Heart right ventricle (tissue), 16 donors: ENCODE measurements at regions of chr1 and their contacts with region 1.

Region 1: GRCh38 chr1:173824331-173825081 is at the starts of genes CENPL and DARS2:
- DNase-seq: peak; percentile 96 to 98
- ATAC-seq: peak; percentile 96 to 100 (median 99)
- H3K4me3 ChIP-seq: peak within 1 kb of the TSS; percentile 56 to 93 (median 71)
- H3K27ac ChIP-seq: peak within 1 kb of the TSS; percentile 77 to 95 (median 92)
- H3K4me1 ChIP-seq: peaks cover 0 to 36% (median 7%) of the 10 kb centered on the region in 9 donors
- H3K27me3 ChIP-seq: no peaks in the 10 kb centered on the region
- CTCF ChIP-seq: no peak
- total RNA-seq, gene CENPL: 2.4 to 7.0 (median 3.5) TPM
- total RNA-seq, gene DARS2: 11.3 to 22.8 (median 16.0) TPM

Region 2: GRCh38 chr1:172745014-172745413 is 1079.5 kb before region 1 on chr1:
- intact Hi-C with region 1: loop called in 4 of 10 experiments (anchors 10 kb)
- DNase-seq: peak in 1 of 2 donors; percentile 33
- ATAC-seq: peak in 7 of 8 donors; percentile 56 to 81 (median 77)
- H3K4me3 ChIP-seq: no peak overlapping the region
- H3K27ac ChIP-seq: no peak overlapping the region
- H3K4me1 ChIP-seq: peaks cover 0 to 26% (median 5%) of the 10 kb centered on the region in 9 donors
- H3K27me3 ChIP-seq: peaks cover 0 to 11% (median 0%) of the 10 kb centered on the region in 7 donors
- CTCF ChIP-seq: peak in 8 of 9 donors; percentile 20 to 73 (median 58)

Region 3: GRCh38 chr1:173420330-173420806 is 404.1 kb before region 1 on chr1:
- intact Hi-C with region 1: loop called in 3 of 10 experiments (anchors 5 to 10 kb)
- DNase-seq: peak; percentile 23 to 54
- ATAC-seq: peak; percentile 84 to 93 (median 88)
- H3K4me3 ChIP-seq: peak overlapping the region in 1 of 10 donors; percentile 20
- H3K27ac ChIP-seq: peak overlapping the region in 1 of 10 donors; percentile 30
- H3K4me1 ChIP-seq: peaks cover 0 to 27% (median 3%) of the 10 kb centered on the region in 9 donors
- H3K27me3 ChIP-seq: no peaks in the 10 kb centered on the region
- CTCF ChIP-seq: peak; percentile 84 to 93 (median 91)

Region 4: GRCh38 chr1:173476664-173477285 is 347.7 kb before region 1 on chr1:
- intact Hi-C with region 1: loop called in 3 of 10 experiments (anchors 2 to 5 kb)
- DNase-seq: peak; percentile 91 to 92
- ATAC-seq: peak; percentile 89 to 96 (median 91)
- H3K4me3 ChIP-seq: peak overlapping the region; percentile 56 to 95 (median 90)
- H3K27ac ChIP-seq: peak overlapping the region; percentile 64 to 99 (median 96)
- H3K4me1 ChIP-seq: peaks cover 4 to 76% (median 46%) of the 10 kb centered on the region in 9 donors
- H3K27me3 ChIP-seq: no peaks in the 10 kb centered on the region
- CTCF ChIP-seq: peak in 3 of 9 donors; percentile 9 to 36 (median 20)

Region 5: GRCh38 chr1:173616859-173617258 is 207.6 kb before region 1 on chr1:
- intact Hi-C with region 1: no loop called
- DNase-seq: no peak
- ATAC-seq: no peak
- H3K4me3 ChIP-seq: no peak overlapping the region
- H3K27ac ChIP-seq: no peak overlapping the region
- H3K4me1 ChIP-seq: no peaks in the 10 kb centered on the region
- H3K27me3 ChIP-seq: no peaks in the 10 kb centered on the region
- CTCF ChIP-seq: no peak

Region 6: DNA sequence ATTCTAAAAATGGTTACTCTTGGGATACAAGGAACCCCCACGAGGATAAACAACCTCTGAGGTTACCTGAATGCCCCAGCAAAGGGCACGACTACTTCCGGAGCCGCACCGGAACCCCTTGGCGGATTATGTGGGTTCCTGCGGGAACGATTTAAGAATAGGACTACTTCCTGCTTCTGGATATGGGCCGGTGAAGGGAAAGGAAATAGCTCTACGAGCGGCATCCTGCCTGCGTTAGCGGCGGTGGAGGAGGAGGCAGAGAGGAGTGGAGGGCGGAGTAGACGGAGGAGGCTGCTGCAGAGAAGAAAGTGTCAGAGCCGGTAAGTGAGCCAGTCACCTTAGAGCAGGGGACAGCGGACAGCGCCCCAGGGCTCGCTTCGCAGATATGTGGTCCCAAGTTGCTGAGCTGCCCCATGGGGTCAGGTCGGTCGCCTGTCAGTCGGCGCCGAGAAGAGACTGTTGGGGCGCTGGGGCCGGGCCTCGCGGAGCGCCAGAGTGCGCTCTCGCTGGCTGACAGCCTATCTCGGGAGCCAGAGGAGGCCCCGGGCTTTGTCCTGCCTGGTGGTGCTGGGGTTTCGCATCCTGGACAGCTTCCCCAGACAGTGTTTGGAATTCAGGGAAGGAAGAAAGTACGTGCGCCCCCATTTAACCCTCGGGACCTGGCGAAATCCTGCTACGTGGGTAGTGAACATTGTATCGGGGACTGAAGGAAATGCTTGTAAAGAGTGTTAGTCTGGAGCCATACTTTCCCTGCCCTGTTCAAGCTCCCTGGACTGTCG is 109.6 kb before region 1 on chr1 and contains the start of gene KLHL20:
- intact Hi-C with region 1: loop called in 1 of 10 experiments (anchors 5 kb)
- DNase-seq: peak; percentile 73 to 84
- ATAC-seq: peak; percentile 95 to 99 (median 99)
- H3K4me3 ChIP-seq: peak within 1 kb of the TSS; percentile 65 to 96 (median 84)
- H3K27ac ChIP-seq: peak within 1 kb of the TSS; percentile 75 to 95 (median 92)
- H3K4me1 ChIP-seq: peaks cover 0 to 30% (median 25%) of the 10 kb centered on the region in 9 donors
- H3K27me3 ChIP-seq: peaks cover 0 to 29% (median 13%) of the 10 kb centered on the region in 7 donors
- CTCF ChIP-seq: peak in 1 of 9 donors; percentile 20
- total RNA-seq, gene KLHL20: 14.5 to 19.4 (median 17.3) TPM

Region 7: DNA sequence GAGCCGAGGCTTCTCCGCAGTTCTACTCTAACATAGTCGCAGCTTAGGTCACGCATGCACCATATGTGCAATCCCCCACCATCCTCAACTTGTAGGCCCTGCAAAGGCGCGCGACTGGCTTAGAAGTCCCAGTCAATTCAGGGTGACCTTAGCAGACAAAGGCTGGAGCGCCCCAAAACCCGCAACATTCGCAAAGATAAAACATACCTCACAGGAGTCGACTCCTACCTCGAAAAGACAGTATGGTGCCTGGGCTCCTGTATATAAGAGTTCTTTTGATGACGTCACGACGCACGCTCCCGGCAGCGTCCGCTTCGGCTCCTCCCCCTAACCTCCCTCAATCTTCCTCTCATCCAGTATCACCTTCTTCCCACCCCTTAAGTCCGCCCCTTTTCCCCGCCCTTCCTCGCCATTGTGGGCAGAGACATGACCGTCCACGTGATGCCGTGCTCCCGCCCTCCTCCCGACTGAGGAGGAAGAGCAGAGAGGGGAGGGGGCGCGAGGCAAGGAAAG is 43.3 kb after region 1 on chr1 and contains the start of gene GAS5:
- intact Hi-C with region 1: loop called in 2 of 10 experiments (anchors 2 to 5 kb)
- DNase-seq: peak; percentile 98 to 100
- ATAC-seq: peak; percentile 95 to 97 (median 96)
- H3K4me3 ChIP-seq: peak within 1 kb of the TSS; percentile 61 to 94 (median 87)
- H3K27ac ChIP-seq: peak within 1 kb of the TSS; percentile 94 to 99 (median 98)
- H3K4me1 ChIP-seq: peaks cover 4 to 67% (median 58%) of the 10 kb centered on the region in 9 donors
- H3K27me3 ChIP-seq: no peaks in the 10 kb centered on the region
- CTCF ChIP-seq: no peak
- total RNA-seq, gene GAS5: 33.1 to 74.1 (median 42.4) TPM

Region 8: DNA sequence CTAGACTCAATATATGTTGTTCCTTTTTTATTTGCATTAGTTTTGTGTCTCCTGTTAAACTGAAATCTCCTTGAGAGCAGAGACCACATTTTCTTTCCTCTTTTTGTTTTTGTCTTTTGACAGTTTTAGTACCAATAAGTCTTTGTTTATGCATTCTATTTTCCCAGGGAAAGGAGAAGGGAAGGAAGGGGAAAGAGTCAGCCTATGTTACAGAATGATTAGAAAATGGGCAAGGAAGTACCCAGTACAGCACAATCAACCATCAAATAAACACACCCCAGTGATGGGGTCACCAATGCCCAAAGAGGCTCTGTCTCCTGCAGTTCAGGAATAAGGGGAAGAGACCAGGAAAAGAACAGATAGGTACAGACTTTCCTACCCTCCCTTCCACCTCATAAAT is 53.7 kb after region 1 on chr1:
- intact Hi-C with region 1: no loop called
- DNase-seq: no peak
- ATAC-seq: no peak
- H3K4me3 ChIP-seq: no peak overlapping the region
- H3K27ac ChIP-seq: no peak overlapping the region
- H3K4me1 ChIP-seq: no peaks in the 10 kb centered on the region
- H3K27me3 ChIP-seq: no peaks in the 10 kb centered on the region
- CTCF ChIP-seq: no peak